Heart right ventricle (tissue), 16 donors: ENCODE measurements at regions of chr10 and their contacts with region 1.

Region 1: GRCh38 chr10:92689663-92690210 is at the start of gene HHEX:
- DNase-seq: peak; percentile 58 to 66
- ATAC-seq: peak; percentile 58 to 86 (median 72)
- H3K4me3 ChIP-seq: peak within 1 kb of the TSS; percentile 60 to 78 (median 67)
- H3K27ac ChIP-seq: peak within 1 kb of the TSS; percentile 75 to 95 (median 94)
- H3K4me1 ChIP-seq: peaks cover 0 to 42% (median 25%) of the 10 kb centered on the region in 9 donors
- H3K27me3 ChIP-seq: peaks cover 0 to 66% (median 57%) of the 10 kb centered on the region in 7 donors
- CTCF ChIP-seq: no peak
- total RNA-seq, gene HHEX: 1.8 to 8.7 (median 4.3) TPM

Region 2: DNA sequence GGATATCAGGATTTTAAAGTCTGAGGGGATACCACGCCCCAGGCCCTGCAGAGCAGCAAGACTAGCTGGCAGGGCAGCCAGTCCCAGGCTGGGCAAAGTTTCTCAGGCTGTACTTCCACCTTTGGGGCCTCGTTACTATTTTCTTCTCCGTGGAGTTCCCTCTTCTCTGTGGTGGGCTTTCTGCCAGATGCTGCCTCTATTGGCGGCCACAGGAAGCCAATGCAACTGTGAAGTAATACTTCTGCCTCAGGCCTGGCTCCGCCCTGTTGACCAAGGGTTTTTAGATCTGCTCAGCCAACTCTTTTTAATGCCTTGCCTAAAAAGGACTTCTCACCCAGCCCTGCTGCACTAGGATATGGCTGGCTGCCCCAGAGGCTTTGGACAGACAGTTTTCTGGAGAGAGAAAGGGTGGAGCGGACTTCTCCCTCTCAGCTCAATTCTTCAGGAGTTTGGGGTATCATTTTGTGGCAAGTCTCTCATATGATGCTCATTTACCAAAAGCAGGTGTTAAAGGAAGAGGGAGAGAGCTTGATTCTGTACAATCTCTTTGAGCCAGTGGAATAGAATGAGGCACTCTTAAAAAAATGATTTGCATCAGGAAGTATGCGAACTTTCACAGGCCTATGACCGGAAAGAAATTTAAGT is 67.5 kb after region 1 on chr10:
- intact Hi-C with region 1: loop called in 2 of 10 experiments (anchors 2 to 5 kb)
- DNase-seq: peak; percentile 74 to 86
- ATAC-seq: peak; percentile 88 to 97 (median 95)
- H3K4me3 ChIP-seq: peak overlapping the region in 3 of 10 donors; percentile 5 to 8 (median 8)
- H3K27ac ChIP-seq: peak overlapping the region in 9 of 10 donors; percentile 50 to 79 (median 69)
- H3K4me1 ChIP-seq: peaks cover 3 to 74% (median 23%) of the 10 kb centered on the region in 9 donors
- H3K27me3 ChIP-seq: no peaks in the 10 kb centered on the region
- CTCF ChIP-seq: peak in 7 of 9 donors; percentile 14 to 39 (median 31)

Region 3: DNA sequence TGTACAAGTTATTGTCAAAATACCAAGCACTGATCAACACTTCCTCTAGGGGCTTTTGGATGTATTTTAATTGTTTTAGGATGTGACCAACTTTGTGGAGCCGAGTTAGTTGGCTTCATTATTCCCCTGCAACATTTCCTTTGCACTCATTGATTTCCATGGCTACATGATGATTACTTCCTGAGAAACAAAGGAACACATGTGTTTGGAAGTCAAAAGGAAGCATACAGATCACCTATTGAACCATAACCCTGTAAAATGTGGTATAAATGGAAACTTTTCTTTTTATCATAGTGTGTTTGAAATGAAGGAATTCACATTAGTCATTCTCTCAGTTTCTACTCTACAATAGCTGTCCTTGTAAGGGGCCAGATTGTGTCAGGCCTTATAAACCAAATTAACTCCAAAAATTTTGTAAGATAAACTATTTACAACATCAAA is 126.4 kb after region 1 on chr10:
- intact Hi-C with region 1: loop called in 5 of 10 experiments (anchors 5 to 10 kb)
- DNase-seq: no peak
- ATAC-seq: peak in 7 of 8 donors; percentile 58 to 90 (median 73)
- H3K4me3 ChIP-seq: no peak overlapping the region
- H3K27ac ChIP-seq: peak overlapping the region in 3 of 10 donors; percentile 17 to 63 (median 33)
- H3K4me1 ChIP-seq: peaks cover 0 to 18% (median 0%) of the 10 kb centered on the region in 9 donors
- H3K27me3 ChIP-seq: peaks cover 0 to 6% (median 0%) of the 10 kb centered on the region in 7 donors
- CTCF ChIP-seq: peak in 3 of 9 donors; percentile 10 to 24 (median 18)

Region 4: GRCh38 chr10:92848441-92849233 is 158.9 kb after region 1 on chr10 and contains the start of gene EXOC6:
- intact Hi-C with region 1: loop called in 1 of 10 experiments (anchors 10 kb)
- DNase-seq: peak; percentile 84 to 85
- ATAC-seq: peak; percentile 84 to 95 (median 92)
- H3K4me3 ChIP-seq: peak within 1 kb of the TSS; percentile 70 to 100 (median 96)
- H3K27ac ChIP-seq: peak within 1 kb of the TSS; percentile 73 to 94 (median 92)
- H3K4me1 ChIP-seq: peaks cover 0 to 38% (median 10%) of the 10 kb centered on the region in 9 donors
- H3K27me3 ChIP-seq: no peaks in the 10 kb centered on the region
- CTCF ChIP-seq: peak in 5 of 9 donors; percentile 2 to 20 (median 14)
- total RNA-seq, gene EXOC6: 8.7 to 11.7 (median 9.5) TPM